H1 (cell line): ENCODE measurements at regions of chr7 and their contacts with region 1.

Region 1: GRCh38 chr7:117715784-117716445 is 157.3 kb downstream of the CTTNBP2 start:
- DNase-seq: peak in 1 of 2 experiments; percentile 52
- H3K4me3 ChIP-seq: no peak overlapping the region
- H3K27ac ChIP-seq: no peak overlapping the region
- H3K4me1 ChIP-seq: no peaks in the 10 kb centered on the region
- H3K27me3 ChIP-seq: no peaks in the 10 kb centered on the region
- CTCF ChIP-seq: peak in 2 of 3 experiments; percentile 75 to 78; a peak in 3 of 4 replicates
- EP300 ChIP-seq: no peak
- POLR2A ChIP-seq: no peak
- RAD21 ChIP-seq: peak; percentile 93 to 94

Region 2: DNA sequence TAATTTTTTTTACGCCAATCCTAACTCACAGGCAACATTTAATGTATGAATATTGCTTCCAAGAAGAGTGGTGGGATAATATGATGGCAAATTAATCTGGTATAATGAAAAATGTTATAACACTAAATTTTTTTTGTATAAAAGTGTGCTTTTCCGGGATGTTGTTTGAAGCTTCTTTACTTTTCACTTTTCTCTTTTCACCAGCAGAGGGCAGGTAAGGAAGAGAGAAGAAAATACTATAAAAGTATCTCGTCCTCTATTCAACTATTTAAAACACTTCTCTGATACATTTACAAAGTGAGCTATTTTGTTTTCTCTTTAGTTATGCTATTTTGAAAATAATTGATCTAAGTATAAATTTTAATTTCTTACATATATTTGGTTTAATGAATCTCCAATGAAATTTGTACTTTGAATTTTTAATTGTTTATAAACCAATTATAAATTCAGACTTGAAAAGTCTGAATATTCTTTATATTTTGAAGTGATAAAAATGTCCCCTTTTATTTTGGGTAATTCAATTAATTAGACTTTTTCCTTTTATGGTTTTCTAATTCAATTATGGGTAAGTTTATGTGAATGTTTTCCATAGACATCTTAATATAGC is 256.8 kb before region 1 on chr7:
- CTCF ChIA-PET with region 1: interaction called, 22 read pairs
- POLR2A ChIA-PET with region 1: no interaction called
- DNase-seq: no peak
- H3K4me3 ChIP-seq: no peak overlapping the region
- H3K27ac ChIP-seq: no peak overlapping the region
- H3K4me1 ChIP-seq: no peaks in the 10 kb centered on the region
- H3K27me3 ChIP-seq: no peaks in the 10 kb centered on the region
- CTCF ChIP-seq: peak in 2 of 3 experiments; percentile 21 to 34; a peak in 2 of 4 replicates
- EP300 ChIP-seq: no peak
- POLR2A ChIP-seq: no peak
- RAD21 ChIP-seq: peak in 1 of 2 experiments; percentile 52; a peak in 3 of 4 replicates

Region 3: DNA sequence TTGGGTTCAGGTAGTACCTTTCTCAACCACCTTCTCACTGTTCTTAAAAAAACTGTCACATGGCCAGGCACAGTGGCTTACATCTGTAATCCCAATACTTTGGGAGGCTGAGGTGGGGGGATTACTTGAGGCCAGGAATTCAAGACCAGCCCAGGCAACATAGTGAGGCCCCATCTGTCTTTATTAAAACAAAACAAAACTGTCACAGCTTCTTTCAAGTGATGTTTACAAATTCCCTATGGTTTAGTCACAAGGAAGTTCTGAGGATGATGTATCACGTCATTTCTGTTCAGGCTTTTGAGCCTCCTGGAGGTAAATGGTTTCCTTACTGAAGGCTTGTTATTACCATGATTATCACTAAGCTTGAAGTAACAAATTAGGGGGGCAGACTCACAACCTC is 49.9 kb before region 1 on chr7:
- CTCF ChIA-PET with region 1: interaction called, 55 read pairs
- POLR2A ChIA-PET with region 1: no interaction called
- DNase-seq: no peak
- H3K4me3 ChIP-seq: no peak overlapping the region
- H3K27ac ChIP-seq: no peak overlapping the region
- H3K4me1 ChIP-seq: peaks cover 0 to 5% (median 2%) of the 10 kb centered on the region in 4 experiments; a peak in 2 of 7 replicates
- H3K27me3 ChIP-seq: no peaks in the 10 kb centered on the region
- CTCF ChIP-seq: no peak
- EP300 ChIP-seq: no peak
- POLR2A ChIP-seq: no peak
- RAD21 ChIP-seq: no peak

Region 4: DNA sequence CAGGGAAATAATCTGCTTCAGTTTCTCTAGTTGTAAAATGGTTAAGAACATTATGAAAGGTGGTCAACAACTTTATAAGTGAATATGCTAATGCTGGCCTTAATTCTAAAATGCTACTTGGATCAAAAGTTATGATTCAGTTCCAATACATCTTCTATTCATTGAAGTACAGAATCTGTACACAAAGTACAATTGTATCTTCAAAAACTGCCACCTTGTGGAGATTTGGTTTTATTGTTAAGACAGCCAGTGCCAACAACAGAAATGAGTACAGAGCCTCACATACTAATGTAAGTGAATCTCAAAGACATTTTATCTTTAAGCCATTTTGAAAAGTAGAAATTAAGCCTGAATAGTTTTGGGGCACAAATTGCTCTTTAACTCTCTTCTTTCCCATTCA is 42.1 kb before region 1 on chr7:
- CTCF ChIA-PET with region 1: interaction called, 55 read pairs
- POLR2A ChIA-PET with region 1: no interaction called
- DNase-seq: no peak
- H3K4me3 ChIP-seq: peak overlapping the region; percentile 8 to 48 (median 22); a peak in 5 of 8 replicates
- H3K27ac ChIP-seq: no peak overlapping the region
- H3K4me1 ChIP-seq: peaks cover 10 to 30% (median 23%) of the 10 kb centered on the region in 4 experiments; a peak in 6 of 7 replicates
- H3K27me3 ChIP-seq: no peaks in the 10 kb centered on the region
- CTCF ChIP-seq: no peak
- EP300 ChIP-seq: no peak
- POLR2A ChIP-seq: no peak
- RAD21 ChIP-seq: no peak

Region 5: DNA sequence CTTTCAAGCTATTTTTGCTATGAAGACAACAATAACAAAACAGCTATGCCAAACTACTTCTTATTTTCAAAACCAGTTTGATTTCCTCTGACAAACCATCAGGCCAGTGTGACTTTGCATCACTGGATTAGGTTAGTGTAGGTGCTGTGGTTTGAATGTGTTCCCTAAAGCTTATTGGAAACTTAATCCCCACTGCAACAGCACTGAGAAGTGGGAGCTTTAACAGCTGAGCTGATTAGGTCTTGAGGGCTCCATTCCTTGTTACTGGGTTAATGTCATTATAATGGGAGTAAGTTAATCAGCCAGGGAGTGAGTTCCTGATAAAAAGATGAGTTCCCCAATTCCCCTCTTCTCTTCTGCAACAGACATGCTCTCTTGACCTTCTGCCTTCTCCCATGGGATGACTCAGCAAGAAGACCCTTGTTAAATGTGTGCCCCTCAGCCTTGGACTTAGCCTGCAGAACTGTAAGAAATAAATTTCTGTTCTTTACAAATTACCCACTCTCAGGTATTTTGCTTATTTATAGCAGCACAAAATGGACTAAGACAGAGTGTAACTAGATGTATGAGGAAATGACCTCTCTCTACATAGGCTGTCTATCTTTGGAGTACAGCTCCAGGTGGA is 29.5 kb before region 1 on chr7:
- CTCF ChIA-PET with region 1: interaction called, 10 read pairs
- POLR2A ChIA-PET with region 1: no interaction called
- DNase-seq: no peak
- H3K4me3 ChIP-seq: no peak overlapping the region
- H3K27ac ChIP-seq: no peak overlapping the region
- H3K4me1 ChIP-seq: peaks cover 2 to 7% (median 4%) of the 10 kb centered on the region in 4 experiments; a peak in 3 of 7 replicates
- H3K27me3 ChIP-seq: peaks cover 0 to under 1% (median 0%) of the 10 kb centered on the region in 4 experiments; a peak in 1 of 7 replicates
- CTCF ChIP-seq: no peak
- EP300 ChIP-seq: no peak
- POLR2A ChIP-seq: no peak
- RAD21 ChIP-seq: no peak

Region 6: GRCh38 chr7:117728890-117729624 is 13.1 kb after region 1 on chr7:
- CTCF ChIA-PET with region 1: interaction called, 14 read pairs
- POLR2A ChIA-PET with region 1: no interaction called
- DNase-seq: no peak
- H3K4me3 ChIP-seq: no peak overlapping the region
- H3K27ac ChIP-seq: no peak overlapping the region
- H3K4me1 ChIP-seq: no peaks in the 10 kb centered on the region
- H3K27me3 ChIP-seq: no peaks in the 10 kb centered on the region
- CTCF ChIP-seq: no peak
- EP300 ChIP-seq: no peak
- POLR2A ChIP-seq: no peak
- RAD21 ChIP-seq: no peak

Region 7: GRCh38 chr7:118114175-118114574 is 398.3 kb after region 1 on chr7:
- CTCF ChIA-PET with region 1: no interaction called
- POLR2A ChIA-PET with region 1: no interaction called
- DNase-seq: no peak
- H3K4me3 ChIP-seq: no peak overlapping the region
- H3K27ac ChIP-seq: no peak overlapping the region
- H3K4me1 ChIP-seq: no peaks in the 10 kb centered on the region
- H3K27me3 ChIP-seq: no peaks in the 10 kb centered on the region
- CTCF ChIP-seq: no peak
- EP300 ChIP-seq: no peak
- POLR2A ChIP-seq: no peak
- RAD21 ChIP-seq: no peak